ENCODE measurements at regions of chr9 and their contacts with region 1.

Region 1: GRCh38 chr9:111037381-111038305 is 627 bp downstream of the LPAR1 start:
- DNase-seq: peak; percentile 60 to 82
- H3K4me3 ChIP-seq: peak overlapping the region; percentile 58
- H3K4me3 Mint-ChIP-seq: peak overlapping the region; percentile 100
- H3K27ac Mint-ChIP-seq: peak overlapping the region; percentile 95
- H3K4me1 ChIP-seq: peaks cover 9% of the 10 kb centered on the region; the same call in 1 of the 2 replicates
- H3K4me1 Mint-ChIP-seq: peaks cover 27% of the 10 kb centered on the region
- H3K27me3 ChIP-seq: no peaks in the 10 kb centered on the region
- H3K27me3 Mint-ChIP-seq: no peaks in the 10 kb centered on the region
- CTCF ChIP-seq: peak; percentile 37 to 41

Region 2: DNA sequence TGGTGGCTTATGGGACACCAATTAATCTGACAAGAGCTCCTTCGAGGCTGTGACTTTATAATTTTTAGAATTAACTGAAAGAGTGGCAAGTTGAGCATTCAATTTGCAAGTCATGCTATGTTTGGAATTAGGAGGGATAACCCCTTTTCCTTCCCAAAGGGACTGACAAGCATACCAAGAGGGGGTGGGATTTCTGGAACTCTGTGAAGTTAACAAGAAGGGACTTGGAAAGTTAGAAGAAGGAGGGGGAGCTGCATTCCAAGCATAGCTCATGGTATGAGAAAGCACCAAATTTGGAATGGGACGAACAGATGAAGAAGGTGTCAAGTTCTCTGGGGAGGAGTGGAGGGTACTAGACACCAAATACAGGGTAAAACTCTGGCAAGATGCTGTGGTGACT is 1266.6 kb before region 1 on chr9:
- CTCF ChIA-PET with region 1: no interaction called
- POLR2A ChIA-PET with region 1: no interaction called
- intact Hi-C with region 1: no loop called
- DNase-seq: no peak
- H3K4me3 ChIP-seq: no peak overlapping the region
- H3K4me3 Mint-ChIP-seq: no peak overlapping the region
- H3K27ac Mint-ChIP-seq: no peak overlapping the region
- H3K4me1 ChIP-seq: peaks cover 16% of the 10 kb centered on the region; the same call in 1 of the 2 replicates
- H3K4me1 Mint-ChIP-seq: peaks cover 8% of the 10 kb centered on the region
- H3K27me3 ChIP-seq: no peaks in the 10 kb centered on the region
- H3K27me3 Mint-ChIP-seq: peaks cover 11% of the 10 kb centered on the region
- CTCF ChIP-seq: no peak

Region 3: DNA sequence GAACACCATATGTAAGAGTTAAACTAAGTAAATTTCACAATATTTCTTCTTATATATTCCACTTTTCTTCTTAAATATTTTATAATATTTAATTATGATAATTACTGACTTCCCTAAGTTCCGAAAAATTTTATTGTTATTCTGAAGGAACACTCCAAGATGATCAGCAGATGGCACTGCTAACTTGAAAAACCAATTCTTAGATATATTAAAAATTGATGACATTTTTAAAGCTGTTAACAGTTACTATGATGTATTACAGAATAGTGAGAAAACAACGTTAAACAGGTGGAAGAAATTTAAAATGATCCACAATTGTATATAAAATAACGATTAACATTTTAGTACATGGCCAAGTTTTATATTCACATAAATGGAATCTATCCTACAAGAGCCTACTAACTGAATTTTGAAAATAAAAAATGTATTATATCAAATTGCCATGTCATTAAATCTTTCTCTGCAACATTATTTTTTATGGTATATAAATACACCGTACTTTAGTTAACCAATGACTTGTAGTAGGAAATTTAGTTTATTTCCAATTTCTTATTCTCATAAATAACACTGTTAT is 399.2 kb before region 1 on chr9:
- CTCF ChIA-PET with region 1: no interaction called
- POLR2A ChIA-PET with region 1: no interaction called
- intact Hi-C with region 1: loop called (anchors 1 kb)
- DNase-seq: no peak
- H3K4me3 ChIP-seq: no peak overlapping the region
- H3K4me3 Mint-ChIP-seq: no peak overlapping the region
- H3K27ac Mint-ChIP-seq: no peak overlapping the region
- H3K4me1 ChIP-seq: no peaks in the 10 kb centered on the region
- H3K4me1 Mint-ChIP-seq: no peaks in the 10 kb centered on the region
- H3K27me3 ChIP-seq: no peaks in the 10 kb centered on the region
- H3K27me3 Mint-ChIP-seq: peaks cover 3% of the 10 kb centered on the region
- CTCF ChIP-seq: peak in 1 of 2 experiments; percentile 31

Region 4: DNA sequence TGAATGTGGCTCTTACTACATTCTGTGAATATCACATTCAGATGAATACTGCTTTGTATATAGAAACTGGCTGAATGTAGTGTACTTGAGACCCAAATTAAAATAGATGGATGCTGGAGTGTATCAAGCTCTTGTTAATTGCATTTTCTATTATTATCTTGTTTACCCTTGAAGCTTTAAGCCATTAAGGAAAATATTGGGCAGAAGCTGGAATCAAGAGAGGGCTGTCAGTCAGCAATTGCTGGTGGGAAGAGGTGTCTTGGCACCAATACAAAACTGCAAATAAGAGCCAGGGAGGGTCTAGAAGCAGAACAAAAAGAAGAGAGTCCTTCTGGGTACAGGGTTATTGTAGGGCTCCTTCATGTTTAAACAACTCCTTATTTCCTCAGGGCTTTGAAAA is 330.2 kb before region 1 on chr9:
- CTCF ChIA-PET with region 1: no interaction called
- POLR2A ChIA-PET with region 1: no interaction called
- intact Hi-C with region 1: loop called (anchors 1 kb)
- DNase-seq: no peak
- H3K4me3 ChIP-seq: no peak overlapping the region
- H3K4me3 Mint-ChIP-seq: no peak overlapping the region
- H3K27ac Mint-ChIP-seq: no peak overlapping the region
- H3K4me1 ChIP-seq: peaks cover 15% of the 10 kb centered on the region
- H3K4me1 Mint-ChIP-seq: peaks cover 12% of the 10 kb centered on the region
- H3K27me3 ChIP-seq: no peaks in the 10 kb centered on the region
- H3K27me3 Mint-ChIP-seq: no peaks in the 10 kb centered on the region
- CTCF ChIP-seq: no peak

Region 5: GRCh38 chr9:110842169-110842568 is 195.5 kb before region 1 on chr9:
- CTCF ChIA-PET with region 1: interaction called, 5 read pairs
- POLR2A ChIA-PET with region 1: no interaction called
- intact Hi-C with region 1: loop called (anchors 5 kb)
- DNase-seq: no peak
- H3K4me3 ChIP-seq: no peak overlapping the region
- H3K4me3 Mint-ChIP-seq: no peak overlapping the region
- H3K27ac Mint-ChIP-seq: no peak overlapping the region
- H3K4me1 ChIP-seq: peaks cover 6% of the 10 kb centered on the region; the same call in 1 of the 2 replicates
- H3K4me1 Mint-ChIP-seq: peaks cover 8% of the 10 kb centered on the region
- H3K27me3 ChIP-seq: no peaks in the 10 kb centered on the region
- H3K27me3 Mint-ChIP-seq: no peaks in the 10 kb centered on the region
- CTCF ChIP-seq: peak in 1 of 2 experiments; percentile 45

Region 6: GRCh38 chr9:110969971-110970386 is 67.7 kb before region 1 on chr9:
- CTCF ChIA-PET with region 1: no interaction called
- POLR2A ChIA-PET with region 1: no interaction called
- intact Hi-C with region 1: loop called (anchors 1 kb)
- DNase-seq: peak; percentile 87
- H3K4me3 ChIP-seq: no peak overlapping the region
- H3K4me3 Mint-ChIP-seq: peak overlapping the region; percentile 48
- H3K27ac Mint-ChIP-seq: peak overlapping the region; percentile 73
- H3K4me1 ChIP-seq: peaks cover 47% of the 10 kb centered on the region
- H3K4me1 Mint-ChIP-seq: peaks cover 39% of the 10 kb centered on the region
- H3K27me3 ChIP-seq: no peaks in the 10 kb centered on the region
- H3K27me3 Mint-ChIP-seq: no peaks in the 10 kb centered on the region
- CTCF ChIP-seq: no peak

Region 7: DNA sequence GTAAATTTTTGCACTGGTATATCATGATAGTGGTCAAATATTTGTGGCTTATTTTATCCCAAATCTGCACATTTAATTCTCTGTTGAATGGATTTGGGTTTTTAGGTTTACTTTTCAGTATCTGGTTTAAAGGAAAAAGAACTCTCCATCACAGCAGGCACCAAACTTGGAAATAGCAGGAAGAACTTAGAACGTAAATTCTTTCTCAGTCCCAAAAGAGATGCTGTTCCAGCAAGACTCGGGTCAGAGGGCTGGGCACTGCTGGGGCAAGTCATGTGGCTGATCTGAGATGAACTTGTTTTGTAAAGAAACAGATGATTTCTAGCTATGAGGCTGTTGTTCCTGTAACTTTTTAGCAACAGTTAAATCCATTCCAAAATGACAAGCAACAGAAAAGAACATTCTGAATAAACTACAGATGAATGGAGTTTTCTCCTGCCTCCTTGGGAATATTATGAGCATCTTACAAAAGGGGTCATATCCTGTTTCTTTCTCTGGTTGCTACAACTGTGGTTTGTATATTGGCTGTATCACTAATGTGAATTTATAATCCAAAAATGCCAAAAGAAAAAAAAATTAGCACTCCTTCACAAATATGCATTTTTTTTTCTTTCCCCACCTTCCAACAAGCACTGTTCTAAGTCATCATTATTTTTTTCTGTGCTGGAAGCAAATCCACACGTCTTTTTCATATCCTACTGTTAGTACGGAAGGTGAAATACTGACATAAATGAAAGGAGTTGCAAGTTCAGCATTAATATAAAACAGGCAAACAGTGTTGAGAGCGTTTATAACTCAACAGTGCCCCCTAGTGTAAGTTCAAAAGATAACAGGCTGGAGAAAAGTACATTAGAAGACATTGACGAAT is 261.3 kb after region 1 on chr9:
- CTCF ChIA-PET with region 1: no interaction called
- POLR2A ChIA-PET with region 1: no interaction called
- intact Hi-C with region 1: loop called (anchors 1 kb)
- DNase-seq: peak in 1 of 2 experiments; percentile 49
- H3K4me3 ChIP-seq: no peak overlapping the region
- H3K4me3 Mint-ChIP-seq: no peak overlapping the region
- H3K27ac Mint-ChIP-seq: no peak overlapping the region
- H3K4me1 ChIP-seq: no peaks in the 10 kb centered on the region
- H3K4me1 Mint-ChIP-seq: no peaks in the 10 kb centered on the region
- H3K27me3 ChIP-seq: no peaks in the 10 kb centered on the region
- H3K27me3 Mint-ChIP-seq: no peaks in the 10 kb centered on the region
- CTCF ChIP-seq: peak; percentile 67 to 80